ENCODE measurements at regions of chr9 and their contacts with region 1.

Region 1: GRCh38 chr9:124126571-124127289 is 115.2 kb downstream of the LHX2 start:
- DNase-seq: peak; percentile 55 to 71 (median 71)
- H3K4me3 ChIP-seq: no peak overlapping the region
- H3K4me3 Mint-ChIP-seq: no peak overlapping the region
- H3K27ac ChIP-seq: no peak overlapping the region
- H3K27ac Mint-ChIP-seq: no peak overlapping the region
- H3K4me1 ChIP-seq: no peaks in the 10 kb centered on the region
- H3K4me1 Mint-ChIP-seq: peaks cover 10% of the 10 kb centered on the region
- H3K27me3 ChIP-seq: no peaks in the 10 kb centered on the region
- H3K27me3 Mint-ChIP-seq: peaks cover 3 to 7% (median 5%) of the 10 kb centered on the region in 3 donors
- CTCF ChIP-seq: peak; percentile 99

Region 2: DNA sequence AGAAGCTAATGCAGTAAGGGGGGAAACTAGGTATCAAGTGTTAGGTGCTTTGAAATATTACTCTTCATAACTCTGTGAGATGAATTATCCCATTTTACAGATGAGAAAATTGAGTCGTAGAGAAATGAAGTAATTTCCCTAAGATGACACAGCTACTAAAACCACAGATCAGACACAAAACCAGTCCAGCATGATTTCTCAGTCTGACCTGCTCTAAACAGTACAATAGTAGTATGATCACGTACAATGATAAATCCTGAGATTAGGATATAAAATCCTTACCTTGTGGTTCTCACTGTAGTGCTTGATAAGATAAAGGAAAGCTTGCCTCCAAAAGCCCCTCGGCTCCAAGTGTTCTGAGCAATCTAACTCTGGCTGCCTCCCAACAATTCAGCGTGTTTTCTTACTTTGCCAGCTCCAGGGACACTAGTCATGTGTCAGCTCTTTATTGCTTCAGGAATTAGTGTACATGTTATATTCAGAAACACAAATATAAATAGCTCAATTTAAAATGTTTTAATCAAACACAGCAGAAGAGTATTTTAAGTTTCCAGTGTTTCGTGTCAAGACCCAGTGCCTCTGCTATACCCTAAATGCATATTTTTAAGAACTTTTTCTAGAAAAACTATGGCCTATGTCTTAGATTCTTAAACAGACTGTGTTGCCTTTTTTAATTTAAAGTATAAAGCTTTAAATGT is 440.4 kb before region 1 on chr9:
- intact Hi-C with region 1: no loop called
- DNase-seq: no peak
- H3K4me3 ChIP-seq: no peak overlapping the region
- H3K4me3 Mint-ChIP-seq: no peak overlapping the region
- H3K27ac ChIP-seq: peak overlapping the region in 1 of 2 donors; percentile 58
- H3K27ac Mint-ChIP-seq: no peak overlapping the region
- H3K4me1 ChIP-seq: peaks cover 16 to 19% of the 10 kb centered on the region in 2 donors
- H3K4me1 Mint-ChIP-seq: peaks cover 20% of the 10 kb centered on the region
- H3K27me3 ChIP-seq: no peaks in the 10 kb centered on the region
- H3K27me3 Mint-ChIP-seq: no peaks in the 10 kb centered on the region
- CTCF ChIP-seq: no peak

Region 3: GRCh38 chr9:124040935-124041816 is 85.6 kb before region 1 on chr9:
- intact Hi-C with region 1: no loop called
- DNase-seq: peak; percentile 33 to 61 (median 58)
- H3K4me3 ChIP-seq: peak overlapping the region in 2 of 3 experiments; percentile 20 to 69
- H3K4me3 Mint-ChIP-seq: peak overlapping the region; percentile 69 to 84
- H3K27ac ChIP-seq: no peak overlapping the region
- H3K27ac Mint-ChIP-seq: no peak overlapping the region
- H3K4me1 ChIP-seq: peaks cover 8 to 20% of the 10 kb centered on the region in 2 donors
- H3K4me1 Mint-ChIP-seq: peaks cover 24% of the 10 kb centered on the region
- H3K27me3 ChIP-seq: peaks cover 35 to 83% of the 10 kb centered on the region in 2 donors
- H3K27me3 Mint-ChIP-seq: peaks cover 81 to 95% (median 84%) of the 10 kb centered on the region in 3 donors
- CTCF ChIP-seq: peak; percentile 99

Region 4: GRCh38 chr9:124078641-124079040 is 48.1 kb before region 1 on chr9:
- intact Hi-C with region 1: no loop called
- DNase-seq: no peak
- H3K4me3 ChIP-seq: no peak overlapping the region
- H3K4me3 Mint-ChIP-seq: no peak overlapping the region
- H3K27ac ChIP-seq: no peak overlapping the region
- H3K27ac Mint-ChIP-seq: no peak overlapping the region
- H3K4me1 ChIP-seq: no peaks in the 10 kb centered on the region
- H3K4me1 Mint-ChIP-seq: peaks cover 10% of the 10 kb centered on the region
- H3K27me3 ChIP-seq: peaks cover 0 to 4% of the 10 kb centered on the region in 2 donors
- H3K27me3 Mint-ChIP-seq: peaks cover 7 to 13% (median 10%) of the 10 kb centered on the region in 3 donors
- CTCF ChIP-seq: no peak

Region 5: DNA sequence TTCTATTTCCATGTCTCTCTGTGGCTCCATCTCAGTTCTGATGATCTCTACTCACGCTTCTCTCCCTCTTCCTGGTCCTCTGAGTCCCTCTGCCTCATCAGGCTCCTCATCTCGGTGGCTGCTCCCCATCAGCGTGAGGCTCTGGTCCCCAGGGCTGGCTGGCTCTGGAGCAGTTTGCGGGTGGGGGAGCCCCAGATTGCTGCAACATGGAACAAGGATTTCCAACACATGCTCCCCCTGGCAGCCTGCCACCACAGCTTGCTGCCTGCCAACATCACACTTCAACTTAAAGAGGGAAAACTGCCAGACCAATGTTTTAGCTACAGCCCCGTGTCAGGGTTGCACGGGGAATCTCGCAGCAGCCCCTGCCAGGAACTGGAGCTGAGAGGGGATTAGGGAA is 53.8 kb after region 1 on chr9:
- intact Hi-C with region 1: no loop called
- DNase-seq: peak; percentile 17 to 54 (median 19)
- H3K4me3 ChIP-seq: no peak overlapping the region
- H3K4me3 Mint-ChIP-seq: peak overlapping the region in 1 of 2 donors; percentile 43
- H3K27ac ChIP-seq: no peak overlapping the region
- H3K27ac Mint-ChIP-seq: peak overlapping the region in 1 of 7 donors; percentile 38
- H3K4me1 ChIP-seq: peaks cover 6 to 7% of the 10 kb centered on the region in 2 donors
- H3K4me1 Mint-ChIP-seq: peaks cover 7% of the 10 kb centered on the region
- H3K27me3 ChIP-seq: peaks cover 0 to 4% of the 10 kb centered on the region in 2 donors
- H3K27me3 Mint-ChIP-seq: peaks cover 5 to 26% (median 18%) of the 10 kb centered on the region in 3 donors
- CTCF ChIP-seq: no peak

Region 6: GRCh38 chr9:124197177-124198095 is 70.7 kb after region 1 on chr9:
- intact Hi-C with region 1: loop called (anchors 5 to 10 kb)
- DNase-seq: peak; percentile 92 to 97 (median 94)
- H3K4me3 ChIP-seq: peak overlapping the region in 2 of 3 experiments; percentile 23 to 50
- H3K4me3 Mint-ChIP-seq: peak overlapping the region; percentile 7 to 77
- H3K27ac ChIP-seq: peak overlapping the region; percentile 70 to 93
- H3K27ac Mint-ChIP-seq: peak overlapping the region; percentile 92 to 99 (median 96)
- H3K4me1 ChIP-seq: peaks cover 58 to 62% of the 10 kb centered on the region in 2 donors
- H3K4me1 Mint-ChIP-seq: peaks cover 73% of the 10 kb centered on the region
- H3K27me3 ChIP-seq: no peaks in the 10 kb centered on the region
- H3K27me3 Mint-ChIP-seq: peaks cover 0 to 4% (median 0%) of the 10 kb centered on the region in 3 donors
- CTCF ChIP-seq: peak; percentile 31

Region 7: DNA sequence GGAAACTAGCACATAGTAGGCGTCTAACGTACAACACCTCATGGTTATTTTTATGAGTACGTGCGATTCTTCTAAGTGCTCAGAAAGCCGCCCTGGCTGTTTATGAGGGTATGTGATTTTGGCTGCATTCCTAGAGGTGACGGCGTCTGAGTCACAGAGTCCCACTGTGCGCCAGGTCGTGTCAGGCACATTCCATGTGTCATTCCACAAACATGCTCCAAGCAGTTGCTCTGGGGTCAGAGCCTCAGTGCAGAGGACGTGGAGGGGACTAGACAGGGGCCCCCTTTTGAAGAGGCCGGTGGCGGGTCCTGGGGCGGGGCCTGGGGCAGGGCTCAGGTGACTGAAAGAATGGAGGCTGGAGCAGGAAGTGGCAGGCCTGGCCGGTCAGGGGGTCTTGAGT is 182.9 kb after region 1 on chr9:
- intact Hi-C with region 1: loop called in 1 of 2 experiments (anchors 5 kb)
- DNase-seq: no peak
- H3K4me3 ChIP-seq: no peak overlapping the region
- H3K4me3 Mint-ChIP-seq: no peak overlapping the region
- H3K27ac ChIP-seq: peak overlapping the region in 1 of 2 donors; percentile 11
- H3K27ac Mint-ChIP-seq: peak overlapping the region in 1 of 7 donors; percentile 42
- H3K4me1 ChIP-seq: peaks cover 14 to 17% of the 10 kb centered on the region in 2 donors
- H3K4me1 Mint-ChIP-seq: peaks cover 22% of the 10 kb centered on the region
- H3K27me3 ChIP-seq: no peaks in the 10 kb centered on the region
- H3K27me3 Mint-ChIP-seq: no peaks in the 10 kb centered on the region
- CTCF ChIP-seq: no peak

Region 8: DNA sequence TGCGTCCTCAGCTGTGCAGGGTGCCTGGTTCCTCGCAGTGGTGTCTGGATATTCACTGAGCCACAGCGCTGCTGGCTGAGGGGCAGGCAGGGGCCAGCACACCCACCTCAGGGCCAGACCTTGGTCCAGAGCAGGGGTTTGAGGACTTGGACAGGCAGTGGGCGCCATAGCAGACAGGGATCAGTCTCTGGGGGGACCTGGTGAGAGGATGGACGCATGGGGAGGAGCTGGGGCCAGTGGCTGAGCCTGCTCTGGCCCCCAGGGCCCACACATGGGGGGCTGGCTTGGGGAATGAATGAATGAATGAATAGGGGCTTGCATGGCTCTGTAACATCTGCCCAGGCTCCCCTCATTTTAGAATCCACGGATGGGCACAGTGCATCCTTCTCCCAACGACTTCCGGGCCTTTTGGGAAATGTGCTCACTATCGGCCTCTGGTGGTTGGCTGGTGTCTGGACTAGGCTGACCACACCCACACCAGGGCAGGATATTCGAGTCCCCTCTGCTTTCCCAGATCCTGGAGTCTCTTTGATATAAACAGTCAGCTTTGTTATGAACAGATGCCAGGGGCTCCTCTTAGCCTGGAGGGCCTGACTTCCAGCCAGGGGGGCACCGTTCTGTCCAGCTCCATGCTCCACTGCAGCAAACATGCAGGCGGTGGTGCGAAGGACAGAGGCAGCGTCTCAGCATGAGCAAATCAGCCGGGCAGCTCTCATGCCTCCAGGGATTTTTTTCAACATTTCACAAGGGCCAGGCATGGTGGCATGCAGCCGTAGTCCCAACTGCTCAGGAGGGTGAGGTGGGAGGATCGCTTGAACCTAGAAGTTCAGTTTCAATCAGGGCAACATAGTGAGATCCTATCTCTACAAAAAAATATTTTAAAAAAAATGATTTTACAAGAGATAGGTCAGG is 193.6 kb after region 1 on chr9:
- intact Hi-C with region 1: loop called (anchors 2 to 5 kb)
- DNase-seq: peak; percentile 28 to 61 (median 55)
- H3K4me3 ChIP-seq: no peak overlapping the region
- H3K4me3 Mint-ChIP-seq: no peak overlapping the region
- H3K27ac ChIP-seq: no peak overlapping the region
- H3K27ac Mint-ChIP-seq: peak overlapping the region in 4 of 7 donors; percentile 23 to 73 (median 62)
- H3K4me1 ChIP-seq: peaks cover 29 to 32% of the 10 kb centered on the region in 2 donors
- H3K4me1 Mint-ChIP-seq: peaks cover 31% of the 10 kb centered on the region
- H3K27me3 ChIP-seq: no peaks in the 10 kb centered on the region
- H3K27me3 Mint-ChIP-seq: no peaks in the 10 kb centered on the region
- CTCF ChIP-seq: peak; percentile 84

Measured in CD14-positive monocyte (primary cell).